Cardiac septum (tissue), 1 donor: ENCODE measurements at regions of chr3 and their contacts with region 1.

Region 1: GRCh38 chr3:11335056-11335608 is 62.9 kb downstream of the ATG7 start:
- DNase-seq: no peak

Region 2: DNA sequence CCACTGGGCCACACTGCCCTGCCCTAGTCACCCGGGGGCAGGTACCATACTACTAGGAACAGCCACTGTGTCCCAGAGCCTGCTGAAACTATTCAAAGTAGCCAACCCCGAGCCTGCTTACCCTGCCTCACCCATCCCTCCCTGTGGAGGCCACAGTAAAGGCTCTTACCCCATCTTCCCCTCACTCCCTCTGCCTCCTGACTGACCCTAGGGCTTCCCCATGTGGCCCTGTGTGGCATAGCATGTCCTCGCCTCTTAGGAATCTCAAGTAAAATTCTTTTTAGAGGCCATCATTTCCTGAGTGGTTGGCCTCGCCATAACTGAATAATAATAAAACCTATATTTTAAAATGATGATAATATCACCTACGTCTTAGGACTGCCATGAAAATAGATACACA is 631.3 kb before region 1 on chr3:
- intact Hi-C with region 1: no loop called
- DNase-seq: no peak

Region 3: DNA sequence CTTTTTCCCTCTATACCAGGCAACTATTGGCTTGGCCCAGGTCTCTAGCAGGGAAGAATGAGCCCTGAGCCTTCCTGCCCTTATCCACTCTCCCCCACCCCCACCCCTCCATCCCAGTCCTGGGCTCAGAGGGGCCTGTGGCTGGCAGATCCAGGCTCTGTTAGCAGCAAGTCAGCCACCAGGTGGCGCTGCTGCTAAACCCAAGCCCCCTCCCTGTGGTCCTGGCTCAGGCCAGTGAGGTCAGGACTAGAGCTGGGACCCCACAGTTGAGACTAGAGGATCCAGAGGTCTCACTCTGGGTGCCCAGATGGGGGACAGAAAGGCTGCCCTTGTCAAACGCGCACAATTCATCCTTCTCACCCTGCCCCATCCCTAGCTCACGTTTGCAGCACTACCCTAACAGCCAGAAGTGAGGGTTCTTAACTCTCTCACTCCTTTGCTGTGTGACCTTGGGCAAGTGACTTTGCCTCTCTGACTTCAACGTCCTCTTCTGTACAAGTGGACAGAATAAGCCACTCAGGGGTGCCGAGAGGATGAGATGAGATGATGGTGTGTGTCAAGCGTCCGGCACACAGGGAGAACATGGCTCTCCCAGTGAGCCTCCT is 389.3 kb before region 1 on chr3:
- intact Hi-C with region 1: loop called (anchors 5 kb)
- DNase-seq: peak; percentile 85

Region 4: GRCh38 chr3:11155341-11156025 is 179.6 kb before region 1 on chr3:
- intact Hi-C with region 1: loop called (anchors 2 kb)
- DNase-seq: peak; percentile 83

Region 5: GRCh38 chr3:11211531-11212298 is 123.4 kb before region 1 on chr3:
- intact Hi-C with region 1: no loop called
- DNase-seq: no peak

Region 6: DNA sequence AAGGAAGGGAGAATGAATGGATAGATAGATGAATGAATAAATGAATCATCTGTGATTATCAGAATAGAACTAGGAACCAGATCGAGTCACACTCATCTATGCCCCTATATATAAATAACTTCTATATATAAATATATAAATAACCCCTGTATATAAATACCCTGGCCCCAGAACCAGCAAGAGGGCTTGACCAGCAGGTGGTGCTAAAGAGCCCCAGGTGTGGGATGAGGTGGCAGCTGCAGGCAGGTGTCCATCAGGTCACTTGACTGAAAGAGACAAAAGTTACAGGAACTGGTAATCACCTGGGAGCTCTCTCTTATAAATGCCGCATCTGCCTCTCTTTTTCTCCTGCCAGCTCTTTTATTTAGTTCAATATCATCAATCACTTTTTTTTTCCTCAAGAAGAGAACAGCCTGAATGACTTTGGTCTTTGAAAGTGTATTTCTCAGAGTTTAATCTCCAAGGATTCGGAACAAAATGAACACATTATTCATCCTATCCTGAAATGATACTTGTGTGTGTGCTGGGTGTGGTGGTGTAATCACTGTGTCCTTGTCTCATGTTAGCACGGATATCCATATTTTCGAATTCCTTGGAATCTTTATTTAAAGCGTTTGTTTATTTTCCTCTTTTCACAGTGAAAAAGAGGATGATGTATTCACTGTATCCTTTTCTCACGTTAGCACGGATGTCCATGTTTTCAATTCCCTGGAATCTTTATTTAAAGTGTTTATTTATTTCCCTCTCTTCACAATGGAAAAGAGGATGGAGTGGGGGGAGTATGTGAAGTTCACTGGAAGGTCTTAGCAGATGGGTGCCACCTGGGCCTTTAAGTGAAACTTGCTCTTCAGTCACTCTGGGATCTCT is 98.3 kb before region 1 on chr3:
- intact Hi-C with region 1: loop called (anchors 5 kb)
- DNase-seq: peak; percentile 80